Endothelial cell of umbilical vein (primary cell): ENCODE measurements at regions of chr16 and their contacts with region 1.

Region 1: DNA sequence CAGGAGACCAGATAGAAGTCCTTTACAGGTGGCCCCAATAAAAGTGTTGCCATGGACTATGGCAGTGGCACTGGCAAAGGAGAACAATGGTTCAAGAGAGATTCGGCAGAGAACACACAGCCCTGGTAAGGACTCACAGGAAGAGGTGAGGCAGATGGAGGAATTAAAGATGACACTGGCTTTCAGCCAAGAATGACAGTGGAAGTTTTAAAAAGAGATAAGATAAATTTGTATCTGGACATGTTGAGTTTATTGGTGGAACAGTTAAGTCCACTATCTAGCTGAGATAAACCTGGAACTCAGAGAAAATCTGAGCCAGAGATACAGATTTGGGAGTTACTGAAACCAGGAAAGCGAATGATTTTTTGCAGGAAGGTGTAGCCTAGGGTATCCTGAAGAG is 20.1 kb downstream of the CMC2 start:
- DNase-seq: no peak
- H3K4me3 ChIP-seq: no peak overlapping the region
- H3K27ac ChIP-seq: no peak overlapping the region
- H3K4me1 ChIP-seq: peaks cover 12% of the 10 kb centered on the region
- H3K27me3 ChIP-seq: no peaks in the 10 kb centered on the region
- CTCF ChIP-seq: no peak
- POLR2A ChIP-seq: no peak

Region 2: DNA sequence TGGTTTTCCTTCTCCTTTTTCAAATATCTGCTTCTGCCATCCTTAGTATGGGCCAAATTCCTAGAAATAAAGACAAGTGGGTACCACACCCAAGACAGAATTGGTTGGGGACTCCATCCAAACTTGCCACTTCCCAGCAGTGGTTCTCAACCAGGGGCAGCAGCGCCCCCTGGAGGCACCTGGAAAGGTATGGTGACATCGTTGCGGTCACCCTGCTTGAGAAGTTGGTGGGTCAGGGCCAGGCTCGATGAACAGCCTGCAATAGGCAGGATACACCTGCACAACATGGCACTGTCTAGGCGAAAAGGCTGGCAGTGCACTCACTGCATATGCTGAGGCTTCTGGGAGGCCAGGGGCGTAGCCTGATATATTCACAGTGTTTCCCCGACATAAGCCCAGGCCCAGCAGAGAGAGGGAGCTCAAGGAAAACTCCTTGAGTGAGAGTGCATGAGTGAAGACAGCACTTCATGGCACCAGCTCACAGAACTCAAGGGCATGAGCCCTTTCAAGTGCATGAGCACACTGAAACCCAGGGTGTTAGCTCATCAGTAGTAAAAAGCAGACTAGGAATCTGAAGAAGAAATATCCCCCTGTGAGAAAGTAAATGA is 37.6 kb before region 1 on chr16:
- CTCF ChIA-PET with region 1: interaction called, 11 read pairs
- POLR2A ChIA-PET with region 1: no interaction called
- dilution Hi-C with region 1: no loop called
- intact Hi-C with region 1: no loop called
- DNase-seq: peak; percentile 73
- H3K4me3 ChIP-seq: no peak overlapping the region
- H3K27ac ChIP-seq: peak overlapping the region; percentile 54
- H3K4me1 ChIP-seq: peaks cover 8% of the 10 kb centered on the region
- H3K27me3 ChIP-seq: no peaks in the 10 kb centered on the region
- CTCF ChIP-seq: peak; percentile 82 to 83
- POLR2A ChIP-seq: no peak

Region 3: DNA sequence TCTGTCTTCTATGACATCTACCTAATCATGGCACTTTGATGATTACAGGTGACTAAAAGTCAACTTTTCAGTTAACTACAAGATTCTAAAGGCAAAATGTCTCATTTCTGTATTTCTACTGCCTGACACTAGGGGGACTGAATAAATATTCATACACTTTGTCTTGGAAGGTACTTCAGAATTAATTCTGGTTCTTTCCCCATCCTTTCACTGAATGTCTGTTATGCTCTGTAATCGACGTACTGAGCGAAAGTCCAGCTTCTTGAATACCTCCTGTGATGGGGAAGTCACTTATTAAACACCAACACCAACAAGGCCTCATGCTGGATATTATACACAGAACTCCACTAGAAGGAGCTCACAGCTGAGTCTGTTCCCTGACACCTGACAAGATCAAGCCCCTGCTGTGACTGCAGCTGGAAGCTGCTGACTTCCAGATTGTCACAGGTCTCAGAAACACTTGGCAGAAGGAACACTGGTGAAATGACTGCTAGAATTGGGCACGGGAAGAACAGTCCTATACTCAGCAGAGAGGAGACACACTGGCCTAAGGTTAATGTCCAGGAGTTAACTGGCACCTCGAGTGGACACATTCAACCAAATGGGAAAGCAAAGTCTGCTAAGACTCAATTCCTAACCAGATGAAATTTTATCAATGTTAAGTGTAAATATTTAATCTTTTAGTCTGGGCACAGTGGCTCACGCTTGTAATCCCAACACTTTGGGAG is 11.7 kb before region 1 on chr16:
- CTCF ChIA-PET with region 1: interaction called, 18 read pairs
- POLR2A ChIA-PET with region 1: no interaction called
- dilution Hi-C with region 1: no loop called
- intact Hi-C with region 1: no loop called
- DNase-seq: peak; percentile 15
- H3K4me3 ChIP-seq: no peak overlapping the region
- H3K27ac ChIP-seq: no peak overlapping the region
- H3K4me1 ChIP-seq: no peaks in the 10 kb centered on the region
- H3K27me3 ChIP-seq: no peaks in the 10 kb centered on the region
- CTCF ChIP-seq: peak; percentile 19 to 38
- POLR2A ChIP-seq: no peak

Region 4: GRCh38 chr16:80997139-80997798 is 10.7 kb after region 1 on chr16:
- CTCF ChIA-PET with region 1: interaction called, 6 read pairs
- POLR2A ChIA-PET with region 1: interaction called, 5 read pairs
- dilution Hi-C with region 1: no loop called
- intact Hi-C with region 1: loop called (anchors 1 kb)
- DNase-seq: peak; percentile 54
- H3K4me3 ChIP-seq: peak overlapping the region; percentile 10 to 51 (median 10)
- H3K27ac ChIP-seq: peak overlapping the region; percentile 51
- H3K4me1 ChIP-seq: peaks cover 31% of the 10 kb centered on the region
- H3K27me3 ChIP-seq: no peaks in the 10 kb centered on the region
- CTCF ChIP-seq: no peak
- POLR2A ChIP-seq: no peak

Region 5: DNA sequence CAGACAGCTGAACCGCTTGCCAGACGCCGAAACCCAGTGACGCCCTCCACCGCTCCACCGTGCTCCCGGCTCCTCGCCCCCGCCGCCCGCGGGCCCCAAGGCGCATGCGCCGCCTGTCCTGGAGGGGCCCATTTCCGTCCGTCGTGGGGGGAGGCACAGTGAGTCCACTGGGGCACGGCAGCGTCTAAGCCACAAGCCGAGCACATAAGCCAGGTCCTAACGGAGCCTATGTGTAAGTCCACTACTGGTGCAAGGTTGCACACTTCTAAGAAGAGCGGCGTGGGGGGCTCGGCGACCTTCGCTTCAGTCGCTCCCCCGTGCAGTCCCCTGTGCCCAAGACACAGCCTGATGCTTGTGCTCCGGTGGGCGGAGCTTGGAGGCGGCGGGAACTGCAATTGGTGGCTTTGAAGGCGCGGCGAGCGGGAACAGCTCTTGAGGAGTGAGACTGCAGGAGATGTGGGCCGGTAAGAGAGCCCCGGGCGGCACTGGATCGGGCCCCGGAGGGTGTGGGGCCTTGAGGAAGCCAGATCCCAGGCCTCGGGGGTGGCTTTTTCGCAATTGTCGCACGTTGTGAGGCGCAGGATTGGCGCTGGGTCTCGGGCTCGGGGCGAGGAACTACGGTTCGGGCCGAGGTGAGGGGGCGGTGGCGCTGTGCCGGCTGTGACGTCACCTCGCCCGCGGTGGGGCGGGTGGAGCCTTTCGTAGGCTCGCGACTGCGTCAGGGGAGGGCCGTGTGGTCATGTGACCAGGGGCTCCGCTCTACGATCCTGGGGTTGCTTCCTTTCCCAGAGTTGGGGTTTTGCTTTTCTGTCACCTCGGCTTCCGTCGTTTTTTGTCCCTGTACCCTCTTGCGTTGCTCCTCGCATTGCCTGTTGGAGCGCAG is 20.5 kb after region 1 on chr16 and contains the starts of genes CENPN and CMC2:
- CTCF ChIA-PET with region 1: interaction called, 10 read pairs
- POLR2A ChIA-PET with region 1: no interaction called
- dilution Hi-C with region 1: no loop called
- intact Hi-C with region 1: no loop called
- DNase-seq: peak; percentile 99
- H3K4me3 ChIP-seq: peak within 1 kb of the TSS; percentile 72 to 87 (median 83)
- H3K27ac ChIP-seq: peak within 1 kb of the TSS; percentile 80
- H3K4me1 ChIP-seq: peaks cover 19% of the 10 kb centered on the region
- H3K27me3 ChIP-seq: no peaks in the 10 kb centered on the region
- CTCF ChIP-seq: peak in 1 of 2 donors; percentile 1
- POLR2A ChIP-seq: peak; percentile 84
- total RNA-seq, gene CENPN: 52.4 and 53.4 TPM in 2 replicates
- total RNA-seq, gene CMC2: 96.6 and 97.8 TPM in 2 replicates